ENCODE measurements at regions of chr1 and their contacts with region 1.

Region 1: DNA sequence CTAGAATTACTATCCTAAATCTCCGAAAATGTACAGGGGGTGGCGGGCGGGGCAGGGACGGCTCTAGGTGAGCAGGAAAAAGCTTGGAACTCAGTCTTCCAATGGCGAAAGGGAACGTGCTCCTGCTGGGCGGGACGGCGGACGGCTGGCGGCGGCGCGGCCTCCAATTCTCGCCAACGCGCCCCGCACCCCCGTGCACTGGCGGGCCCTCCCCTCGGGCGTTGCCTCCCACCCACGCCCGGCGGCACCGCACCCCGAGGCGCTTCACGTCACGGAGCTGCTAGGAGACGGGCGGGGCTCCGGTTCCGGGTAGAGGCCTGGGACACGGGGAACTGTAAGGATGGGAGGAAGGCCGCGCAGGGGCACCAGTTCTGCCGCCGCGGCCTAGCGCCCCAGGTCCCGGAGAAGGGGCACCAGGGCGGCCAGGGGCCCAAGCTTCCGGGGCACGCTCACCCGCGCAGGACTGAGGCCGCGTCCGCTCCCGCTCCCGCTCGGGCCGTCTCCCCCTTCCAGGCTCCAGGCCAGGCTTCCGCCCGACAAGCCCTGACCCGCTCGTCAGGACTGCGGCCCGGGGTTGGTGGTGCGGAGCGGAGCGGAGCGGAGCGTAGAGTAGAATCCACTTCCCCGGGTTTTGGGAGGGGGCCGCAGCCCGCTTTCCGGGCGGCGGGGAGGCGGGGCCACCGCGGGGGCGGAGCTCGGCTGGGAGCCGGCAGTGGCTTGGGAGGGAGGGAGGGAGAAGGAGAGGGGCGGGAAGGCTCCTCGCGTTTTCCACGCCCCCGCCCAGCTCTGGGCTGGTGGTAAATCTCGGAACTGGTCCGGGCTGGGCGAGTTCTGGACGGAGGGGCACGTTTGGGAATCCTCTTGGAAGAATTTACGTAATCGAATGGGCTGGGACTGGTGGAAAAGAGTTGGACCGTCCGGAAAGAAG is at the start of gene DDX59:
- DNase-seq: peak; percentile 97 to 98 (median 98)
- ATAC-seq: peak; percentile 93
- H3K4me3 ChIP-seq: peak within 1 kb of the TSS; percentile 83
- H3K27ac ChIP-seq: peak within 1 kb of the TSS; percentile 98
- H3K4me1 ChIP-seq: peaks cover 12 to 13% of the 10 kb centered on the region in 2 experiments; a peak in 4 of 5 replicates
- H3K27me3 ChIP-seq: no peaks in the 10 kb centered on the region
- CTCF ChIP-seq: no peak
- EP300 ChIP-seq: peak; percentile 59
- POLR2A ChIP-seq: peak; percentile 98
- RAD21 ChIP-seq: peak in 1 of 2 experiments; percentile 5; a peak in 1 of 4 replicates
- polyA plus RNA-seq, gene DDX59: 8.3 TPM

Region 2: GRCh38 chr1:200634261-200635122 is 35.1 kb before region 1 on chr1:
- CTCF ChIA-PET with region 1: no interaction called
- POLR2A ChIA-PET with region 1: interaction called, 17 read pairs
- in situ Hi-C with region 1: no loop called
- intact Hi-C with region 1: no loop called
- DNase-seq: no peak
- ATAC-seq: no peak
- H3K4me3 ChIP-seq: no peak overlapping the region
- H3K27ac ChIP-seq: no peak overlapping the region
- H3K4me1 ChIP-seq: peaks cover 14% of the 10 kb centered on the region in 2 experiments
- H3K27me3 ChIP-seq: no peaks in the 10 kb centered on the region
- CTCF ChIP-seq: peak; percentile 44 to 58 (median 55)
- EP300 ChIP-seq: no peak
- POLR2A ChIP-seq: no peak
- RAD21 ChIP-seq: peak in 1 of 2 experiments; percentile 63; a peak in 2 of 4 replicates

Region 3: DNA sequence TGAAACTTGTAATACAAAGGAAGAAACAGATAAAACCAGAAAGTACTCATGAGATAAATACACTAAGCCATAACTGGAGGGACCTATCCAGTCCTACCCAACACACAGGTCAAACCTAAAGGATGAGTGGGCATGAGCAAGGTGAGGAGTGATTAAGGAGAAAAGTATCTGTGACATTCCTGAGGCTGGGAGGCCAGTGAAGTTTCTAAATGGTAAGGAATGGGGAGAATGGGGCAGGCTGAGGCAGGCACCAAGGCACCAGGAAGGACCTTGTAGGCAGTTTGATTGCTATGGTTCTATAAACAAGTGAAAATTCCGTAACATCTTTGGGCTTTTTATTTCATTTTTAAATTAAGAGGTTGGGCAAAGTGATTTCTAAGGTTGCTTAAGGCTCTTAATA is 10.3 kb before region 1 on chr1:
- CTCF ChIA-PET with region 1: no interaction called
- POLR2A ChIA-PET with region 1: interaction called, 28 read pairs
- in situ Hi-C with region 1: no loop called
- intact Hi-C with region 1: no loop called
- DNase-seq: no peak
- ATAC-seq: no peak
- H3K4me3 ChIP-seq: no peak overlapping the region
- H3K27ac ChIP-seq: no peak overlapping the region
- H3K4me1 ChIP-seq: peaks cover 0 to 3% of the 10 kb centered on the region in 2 experiments; a peak in 1 of 5 replicates
- H3K27me3 ChIP-seq: no peaks in the 10 kb centered on the region
- CTCF ChIP-seq: no peak
- EP300 ChIP-seq: no peak
- POLR2A ChIP-seq: no peak
- RAD21 ChIP-seq: no peak

Region 4: DNA sequence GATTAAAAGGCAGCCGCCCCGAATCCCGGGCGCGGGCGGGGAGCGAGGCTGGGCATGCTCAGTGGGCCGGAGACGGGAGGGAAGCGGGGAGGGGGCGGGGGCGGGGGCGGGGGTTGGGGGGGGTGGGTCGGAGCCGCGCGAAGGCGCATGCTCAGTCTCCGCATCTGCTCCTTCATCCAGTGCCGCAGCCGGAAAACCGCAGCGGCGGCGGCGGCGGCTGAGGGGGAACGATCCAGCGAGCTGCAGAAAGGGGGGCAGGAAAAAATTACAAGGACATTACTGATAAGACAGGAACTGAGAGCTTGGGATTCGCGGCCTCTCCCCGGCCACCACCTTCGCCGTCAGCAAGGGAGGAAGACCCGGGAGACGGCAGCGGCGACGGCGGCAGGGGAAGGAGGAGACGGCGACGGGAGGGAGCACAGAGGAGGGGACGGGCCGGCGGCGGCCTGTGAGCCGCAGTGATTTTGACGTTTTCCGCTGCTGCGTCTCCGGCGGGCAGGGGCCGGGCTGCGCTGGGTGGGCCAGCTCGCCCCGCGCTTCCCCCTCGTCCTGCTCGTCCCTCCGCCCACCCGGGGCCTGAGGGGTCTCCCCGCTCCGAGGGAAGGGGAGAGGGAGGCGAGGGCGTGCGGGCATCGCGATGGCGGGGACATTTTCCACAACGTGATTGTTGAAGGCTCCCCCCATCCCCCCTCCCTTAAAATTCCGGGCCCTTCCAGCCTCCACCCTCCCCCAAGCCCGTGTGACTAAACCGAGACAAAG is 69.3 kb after region 1 on chr1 and contains the start of gene CAMSAP2:
- CTCF ChIA-PET with region 1: no interaction called
- POLR2A ChIA-PET with region 1: interaction called, 10 read pairs
- in situ Hi-C with region 1: no loop called
- intact Hi-C with region 1: loop called (anchors 2 kb)
- DNase-seq: peak; percentile 90 to 97 (median 94)
- ATAC-seq: peak; percentile 95
- H3K4me3 ChIP-seq: peak within 1 kb of the TSS; percentile 69
- H3K27ac ChIP-seq: peak within 1 kb of the TSS; percentile 50; the same call in 2 of the 3 replicates
- H3K4me1 ChIP-seq: peaks cover 10 to 11% of the 10 kb centered on the region in 2 experiments; a peak in 3 of 5 replicates
- H3K27me3 ChIP-seq: no peaks in the 10 kb centered on the region
- CTCF ChIP-seq: no peak
- EP300 ChIP-seq: no peak
- POLR2A ChIP-seq: no peak; the same call in 1 of the 2 replicates
- RAD21 ChIP-seq: 0 out of 4 replicates have a peak, but pooled peaks of 1 of the 2 experiments have one; percentile 8
- polyA plus RNA-seq, gene CAMSAP2: 1.4 to 1.7 TPM